ENCODE measurements at regions of chr17 and their contacts with region 1.

Region 1: GRCh38 chr17:79970576-79971068 is 65.0 kb downstream of the TBC1D16 start:
- DNase-seq: peak in 3 of 9 experiments; percentile 41 to 83 (median 76)
- ATAC-seq: peak; percentile 55
- H3K4me3 ChIP-seq: no peak overlapping the region
- H3K4me3 Mint-ChIP-seq: no peak overlapping the region
- H3K27ac ChIP-seq: no peak overlapping the region
- H3K27ac Mint-ChIP-seq: no peak overlapping the region
- H3K4me1 ChIP-seq: peaks cover 4% of the 10 kb centered on the region
- H3K4me1 Mint-ChIP-seq: peaks cover 7% of the 10 kb centered on the region
- H3K27me3 ChIP-seq: no peaks in the 10 kb centered on the region
- H3K27me3 Mint-ChIP-seq: no peaks in the 10 kb centered on the region
- CTCF ChIP-seq: peak; percentile 44

Region 2: DNA sequence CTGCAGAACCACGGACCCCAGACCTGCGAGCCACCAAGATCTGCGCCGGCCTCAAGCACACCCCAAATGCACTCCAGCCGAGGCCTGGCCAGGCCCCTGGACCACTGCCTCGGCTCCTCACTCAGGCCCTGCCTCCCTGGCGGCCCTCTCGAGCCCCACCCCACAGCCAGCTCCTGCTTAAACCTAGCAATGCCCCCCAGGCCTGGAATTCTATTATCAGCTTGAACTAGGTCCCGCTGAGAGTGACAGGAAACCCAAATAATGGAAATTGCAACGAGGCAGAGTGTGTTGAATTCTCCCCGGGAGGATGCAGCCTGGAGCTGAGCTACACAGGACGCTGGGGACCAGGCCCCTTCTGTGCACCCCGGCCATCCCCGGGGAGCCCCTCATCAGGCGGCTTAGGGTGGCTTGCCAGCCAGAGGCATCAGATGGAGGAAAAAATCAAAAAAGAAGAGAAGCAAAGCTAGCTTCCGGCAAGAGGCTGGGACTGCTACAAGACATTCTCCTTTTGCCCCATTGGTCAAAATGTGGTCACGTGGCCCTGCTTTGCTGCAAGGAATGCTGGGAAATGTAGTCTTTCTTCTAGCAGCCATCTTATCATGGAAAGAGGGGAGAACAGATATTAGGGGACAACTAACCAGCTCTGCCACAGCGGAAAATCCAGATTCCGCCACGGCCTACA is 242.3 kb before region 1 on chr17:
- CTCF ChIA-PET with region 1: no interaction called
- POLR2A ChIA-PET with region 1: no interaction called
- intact Hi-C with region 1: no loop called
- DNase-seq: peak; percentile 63 to 93 (median 82)
- ATAC-seq: peak; percentile 87
- H3K4me3 ChIP-seq: peak overlapping the region; percentile 17 to 54
- H3K4me3 Mint-ChIP-seq: peak overlapping the region; percentile 72
- H3K27ac ChIP-seq: peak overlapping the region; percentile 33 to 41
- H3K27ac Mint-ChIP-seq: peak overlapping the region; percentile 85
- H3K4me1 ChIP-seq: peaks cover 10% of the 10 kb centered on the region
- H3K4me1 Mint-ChIP-seq: peaks cover 24% of the 10 kb centered on the region
- H3K27me3 ChIP-seq: no peaks in the 10 kb centered on the region
- H3K27me3 Mint-ChIP-seq: no peaks in the 10 kb centered on the region
- CTCF ChIP-seq: no peak

Region 3: DNA sequence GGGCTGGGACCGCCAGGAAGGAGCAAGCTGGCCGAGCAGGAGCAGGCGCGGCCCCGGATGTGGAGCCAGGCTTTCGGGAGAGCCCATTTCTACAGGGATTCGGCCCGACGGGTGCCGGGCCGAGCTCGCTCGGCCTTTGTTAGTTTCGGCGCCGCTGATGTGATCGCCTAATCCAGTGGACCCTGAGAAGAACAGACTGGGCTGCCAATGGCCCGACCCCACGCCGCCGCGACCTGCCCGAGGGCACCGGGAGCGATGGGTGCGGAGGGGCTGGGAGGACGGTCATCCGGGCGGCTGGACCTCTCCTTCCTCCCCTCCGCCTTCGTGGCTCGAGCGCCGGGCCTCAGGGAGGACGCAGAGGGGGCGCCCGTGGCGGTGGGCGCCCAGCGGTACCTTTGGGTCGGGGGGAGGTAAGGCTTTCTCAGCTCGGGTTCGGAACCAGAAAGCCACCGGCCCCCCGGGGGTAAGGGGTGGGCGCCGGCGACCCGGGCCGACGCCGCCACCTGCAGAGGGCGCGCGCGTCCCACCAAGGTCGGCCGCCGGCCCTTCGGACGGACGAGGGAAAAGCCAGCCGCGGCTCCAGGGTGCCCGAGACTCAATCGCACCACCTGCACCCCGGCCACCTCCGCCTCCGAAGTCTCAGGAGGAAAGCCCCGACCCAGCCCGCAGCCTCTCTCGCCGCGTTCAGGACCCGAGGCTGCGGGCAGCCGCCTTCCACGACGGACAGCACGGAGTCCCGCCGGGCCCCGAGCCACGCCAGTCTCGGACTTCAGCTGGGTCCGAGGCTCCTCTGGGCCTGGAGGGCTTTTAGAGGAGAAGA is 180.9 kb before region 1 on chr17:
- CTCF ChIA-PET with region 1: interaction called, 5 read pairs
- POLR2A ChIA-PET with region 1: no interaction called
- intact Hi-C with region 1: loop called in 1 of 2 experiments (anchors 1 kb)
- DNase-seq: peak in 2 of 9 experiments; percentile 54 to 56
- ATAC-seq: peak; percentile 24
- H3K4me3 ChIP-seq: no peak overlapping the region
- H3K4me3 Mint-ChIP-seq: peak overlapping the region; percentile 29
- H3K27ac ChIP-seq: no peak overlapping the region
- H3K27ac Mint-ChIP-seq: no peak overlapping the region
- H3K4me1 ChIP-seq: peaks cover 27% of the 10 kb centered on the region
- H3K4me1 Mint-ChIP-seq: peaks cover 14% of the 10 kb centered on the region
- H3K27me3 ChIP-seq: peaks cover 33 to 39% of the 10 kb centered on the region in 2 experiments
- H3K27me3 Mint-ChIP-seq: peaks cover 49% of the 10 kb centered on the region
- CTCF ChIP-seq: peak; percentile 56

Region 4: DNA sequence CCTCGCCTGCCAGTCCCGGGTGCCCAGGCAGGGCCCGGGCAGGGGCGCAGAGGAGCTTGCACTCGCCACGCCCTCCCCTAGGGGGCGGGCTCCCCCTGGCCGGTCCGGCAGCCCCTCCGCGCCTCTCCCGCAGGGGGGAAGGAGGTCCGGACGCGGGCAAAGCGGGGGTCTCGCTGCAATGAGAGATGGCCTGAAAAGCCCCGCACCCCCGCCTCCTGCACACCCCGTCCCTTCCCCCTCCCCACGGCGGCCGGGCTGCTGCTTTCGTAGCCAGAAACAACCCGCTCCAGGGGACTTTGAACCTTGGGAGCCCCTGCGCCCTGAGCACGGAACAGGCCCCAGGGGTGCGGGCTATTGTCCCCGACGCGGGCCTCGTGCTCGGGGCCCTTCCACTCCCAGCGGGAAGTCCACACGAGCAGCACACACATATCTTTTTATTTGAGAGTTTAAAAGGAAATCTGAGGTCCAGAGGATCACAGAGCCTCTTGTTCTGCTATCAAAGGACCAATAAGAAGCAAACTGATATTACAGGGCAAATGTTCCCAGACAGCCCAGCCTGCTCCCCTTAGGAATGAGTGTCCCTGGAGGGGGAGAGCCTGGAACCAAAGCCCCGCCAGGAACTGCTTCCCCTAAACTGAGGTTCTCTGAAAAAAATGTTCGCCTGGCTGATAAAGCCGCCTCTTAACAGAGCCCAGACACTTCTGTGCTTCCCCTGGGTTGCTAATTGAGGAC is 125.6 kb before region 1 on chr17:
- CTCF ChIA-PET with region 1: interaction called, 9 read pairs
- POLR2A ChIA-PET with region 1: interaction called, 3 read pairs
- intact Hi-C with region 1: loop called in 1 of 2 experiments (anchors 2 kb)
- DNase-seq: peak in 7 of 9 experiments; percentile 31 to 76 (median 59)
- ATAC-seq: peak; percentile 56
- H3K4me3 ChIP-seq: no peak overlapping the region
- H3K4me3 Mint-ChIP-seq: peak overlapping the region; percentile 18
- H3K27ac ChIP-seq: no peak overlapping the region
- H3K27ac Mint-ChIP-seq: no peak overlapping the region
- H3K4me1 ChIP-seq: peaks cover 44% of the 10 kb centered on the region
- H3K4me1 Mint-ChIP-seq: peaks cover 28% of the 10 kb centered on the region
- H3K27me3 ChIP-seq: peaks cover 35 to 44% of the 10 kb centered on the region in 2 experiments
- H3K27me3 Mint-ChIP-seq: peaks cover 32% of the 10 kb centered on the region
- CTCF ChIP-seq: peak; percentile 78

Region 5: GRCh38 chr17:79937391-79938335 is 33.0 kb before region 1 on chr17:
- CTCF ChIA-PET with region 1: interaction called, 12 read pairs
- POLR2A ChIA-PET with region 1: no interaction called
- intact Hi-C with region 1: no loop called
- DNase-seq: peak in 3 of 9 experiments; percentile 43 to 67 (median 57)
- ATAC-seq: peak; percentile 54
- H3K4me3 ChIP-seq: peak overlapping the region; percentile 26 to 45
- H3K4me3 Mint-ChIP-seq: peak overlapping the region; percentile 77
- H3K27ac ChIP-seq: peak overlapping the region; percentile 57 to 65
- H3K27ac Mint-ChIP-seq: peak overlapping the region; percentile 89
- H3K4me1 ChIP-seq: peaks cover 57% of the 10 kb centered on the region
- H3K4me1 Mint-ChIP-seq: peaks cover 58% of the 10 kb centered on the region
- H3K27me3 ChIP-seq: no peaks in the 10 kb centered on the region
- H3K27me3 Mint-ChIP-seq: peaks cover 5% of the 10 kb centered on the region
- CTCF ChIP-seq: no peak

Measured in CD8-positive, alpha-beta T cell (primary cell).